Right ventricle myocardium inferior (tissue), 1 donor: ENCODE measurements at regions of chr10 and their contacts with region 1.

Region 1: DNA sequence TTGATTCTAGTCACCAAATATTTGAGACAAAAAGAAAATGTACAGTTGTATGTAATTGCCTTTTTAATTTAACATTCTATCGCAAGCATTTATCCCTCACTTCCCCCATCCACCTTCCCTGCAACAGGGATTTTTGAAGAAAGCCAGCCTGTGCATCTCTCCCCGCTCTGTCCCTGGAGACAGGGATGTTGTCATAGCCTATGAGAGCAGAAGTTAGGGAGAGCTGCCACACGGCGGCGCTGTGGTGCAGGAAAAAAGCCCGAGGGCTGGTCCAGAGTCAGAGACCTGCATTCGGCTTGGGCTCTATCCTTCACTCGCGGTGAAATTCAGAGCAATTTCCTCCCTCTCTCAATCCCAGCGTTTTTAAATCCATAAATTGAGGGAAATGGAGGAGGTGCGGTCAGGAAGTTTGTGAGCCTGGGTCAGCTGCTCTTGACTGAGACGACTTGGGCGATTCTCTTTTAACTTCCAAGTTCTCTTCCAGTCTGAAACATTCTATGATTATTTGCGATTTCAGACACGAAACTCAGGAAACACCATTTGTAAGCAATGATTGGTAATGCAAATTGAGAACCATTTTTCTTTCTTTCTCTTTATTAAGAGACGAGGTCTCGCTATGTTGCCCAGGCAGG is 17.5 kb downstream of the HKDC1 start:
- DNase-seq: peak; percentile 93
- ATAC-seq: peak; percentile 97

Region 2: DNA sequence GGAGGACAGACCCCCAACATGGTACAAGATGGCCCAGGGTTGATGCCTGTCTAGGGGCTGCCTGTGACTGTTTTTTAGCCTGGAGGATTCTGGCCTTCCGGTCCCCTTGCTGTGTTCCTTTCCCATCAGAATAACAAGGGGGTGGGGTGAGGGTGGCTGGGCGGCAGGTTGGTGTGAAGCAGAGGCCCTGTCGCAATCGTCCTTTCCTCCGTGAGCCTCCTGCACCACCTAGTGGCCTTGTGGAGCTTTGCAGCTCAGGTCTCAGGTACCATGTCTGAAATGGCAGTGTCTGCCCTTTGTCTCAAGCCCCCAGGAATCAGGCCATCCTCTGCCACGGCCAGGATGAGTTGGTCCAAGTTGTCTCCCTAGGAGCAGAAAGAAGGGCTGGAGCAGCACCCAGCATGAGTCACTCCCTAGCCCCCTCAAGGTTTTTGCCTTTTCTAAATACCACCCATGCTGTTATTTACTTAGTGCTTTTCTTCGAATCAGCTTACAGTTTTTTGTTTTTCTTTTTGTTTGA is 154.9 kb after region 1 on chr10:
- intact Hi-C with region 1: loop called (anchors 1 kb)
- DNase-seq: peak; percentile 92
- ATAC-seq: peak; percentile 87

Region 3: GRCh38 chr10:69413221-69413865 is 175.7 kb after region 1 on chr10:
- intact Hi-C with region 1: loop called (anchors 5 kb)
- DNase-seq: peak; percentile 79
- ATAC-seq: peak; percentile 38

Region 4: GRCh38 chr10:70034232-70034631 is 796.6 kb after region 1 on chr10:
- intact Hi-C with region 1: no loop called
- DNase-seq: no peak
- ATAC-seq: no peak